PC-9 (cell line): ENCODE measurements at regions of chr19 and their contacts with region 1.

Region 1: GRCh38 chr19:45692187-45693105 is at the start of gene QPCTL:
- DNase-seq: peak; percentile 97 to 100
- H3K4me3 ChIP-seq: peak within 1 kb of the TSS; percentile 80
- H3K27ac ChIP-seq: peak within 1 kb of the TSS; percentile 72
- H3K4me1 ChIP-seq: peaks cover 11% of the 10 kb centered on the region
- H3K27me3 ChIP-seq: no peaks in the 10 kb centered on the region
- CTCF ChIP-seq: no peak
- total RNA-seq, gene QPCTL: 27.6 and 42.8 TPM in 2 replicates

Region 2: GRCh38 chr19:45523642-45524256 is 168.7 kb before region 1 on chr19:
- CTCF ChIA-PET with region 1: no interaction called
- POLR2A ChIA-PET with region 1: no interaction called
- intact Hi-C with region 1: loop called (anchors 5 kb)
- DNase-seq: peak; percentile 75 to 81
- H3K4me3 ChIP-seq: no peak overlapping the region
- H3K27ac ChIP-seq: peak overlapping the region; percentile 17; the same call in 1 of the 2 replicates
- H3K4me1 ChIP-seq: peaks cover 36% of the 10 kb centered on the region
- H3K27me3 ChIP-seq: no peaks in the 10 kb centered on the region
- CTCF ChIP-seq: peak; percentile 98

Region 3: DNA sequence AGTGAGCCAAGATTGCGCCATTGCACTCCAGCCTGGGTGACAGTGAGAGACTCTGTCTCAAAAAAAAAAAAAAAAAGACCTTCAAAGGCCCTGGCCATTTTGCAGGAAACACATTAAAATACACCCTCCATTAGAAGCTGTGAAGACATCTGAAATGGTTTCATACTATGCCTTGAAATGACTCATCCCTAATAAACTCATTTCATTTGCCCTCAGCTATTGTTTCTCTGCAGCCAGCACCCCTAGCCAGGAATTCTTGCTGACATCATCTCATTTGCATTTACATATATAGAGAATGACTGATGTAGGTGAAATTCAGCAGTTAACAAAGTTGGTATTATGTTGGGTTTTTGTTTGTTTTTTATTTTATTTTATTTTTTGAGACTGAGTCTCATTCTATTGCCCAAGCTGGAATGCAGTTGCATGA is 61.9 kb before region 1 on chr19:
- CTCF ChIA-PET with region 1: no interaction called
- POLR2A ChIA-PET with region 1: no interaction called
- intact Hi-C with region 1: no loop called
- DNase-seq: peak; percentile 51 to 99
- H3K4me3 ChIP-seq: no peak overlapping the region
- H3K27ac ChIP-seq: peak overlapping the region; percentile 91
- H3K4me1 ChIP-seq: peaks cover 34% of the 10 kb centered on the region
- H3K27me3 ChIP-seq: no peaks in the 10 kb centered on the region
- CTCF ChIP-seq: no peak

Region 4: DNA sequence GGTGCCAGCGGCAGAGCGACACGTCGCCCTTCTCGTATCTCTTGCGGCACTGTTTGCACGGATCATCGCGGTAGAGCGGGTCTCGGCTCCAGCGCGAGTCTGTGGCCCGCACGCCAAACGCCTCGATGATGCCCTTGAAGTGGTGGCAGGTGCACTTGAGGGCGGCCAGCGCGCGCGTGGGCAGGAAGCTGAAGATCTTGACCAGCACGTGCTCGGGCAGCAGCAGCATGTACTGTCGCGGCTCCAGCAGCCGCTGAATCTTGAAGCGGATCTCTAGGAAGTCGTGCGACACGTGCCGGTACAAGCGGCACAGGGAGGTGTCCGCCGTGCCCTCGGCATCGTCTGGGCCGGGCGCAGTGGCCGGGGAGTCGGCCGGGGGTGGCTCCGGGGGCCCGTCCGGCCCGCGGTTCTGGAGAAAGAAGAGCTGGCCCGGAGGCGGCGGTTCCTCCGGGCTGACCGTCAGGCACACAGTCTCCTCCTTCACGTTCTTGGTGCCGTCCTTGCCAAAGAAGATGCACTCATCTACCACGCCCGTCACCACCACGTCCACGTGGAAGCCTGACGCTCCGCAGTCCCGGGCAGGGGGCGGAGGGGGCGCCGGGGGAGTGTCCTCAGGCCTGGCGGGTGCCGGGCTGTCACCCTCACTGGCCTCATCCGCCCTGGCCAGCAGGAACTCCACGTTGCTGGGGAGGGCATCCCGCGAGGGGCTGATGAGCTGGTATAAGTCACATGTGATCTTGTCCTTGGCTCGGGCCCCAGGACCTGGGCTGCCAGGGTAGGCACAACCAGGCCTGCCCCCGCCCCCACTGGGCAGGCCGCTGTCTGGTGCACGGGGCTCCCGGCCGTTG is 19.6 kb after region 1 on chr19:
- CTCF ChIA-PET with region 1: no interaction called
- POLR2A ChIA-PET with region 1: interaction called, 13 read pairs
- intact Hi-C with region 1: no loop called
- DNase-seq: no peak
- H3K4me3 ChIP-seq: no peak overlapping the region
- H3K27ac ChIP-seq: no peak overlapping the region
- H3K4me1 ChIP-seq: peaks cover 9% of the 10 kb centered on the region
- H3K27me3 ChIP-seq: no peaks in the 10 kb centered on the region
- CTCF ChIP-seq: no peak

Region 5: GRCh38 chr19:45809643-45810159 is 117.3 kb after region 1 on chr19:
- CTCF ChIA-PET with region 1: interaction called, 15 read pairs
- POLR2A ChIA-PET with region 1: no interaction called
- intact Hi-C with region 1: no loop called
- DNase-seq: peak; percentile 19 to 58
- H3K4me3 ChIP-seq: no peak overlapping the region
- H3K27ac ChIP-seq: peak overlapping the region; percentile 61
- H3K4me1 ChIP-seq: peaks cover 12% of the 10 kb centered on the region
- H3K27me3 ChIP-seq: no peaks in the 10 kb centered on the region
- CTCF ChIP-seq: no peak